Head of caudate nucleus (tissue), 42 donors: ENCODE measurements at regions of chr1 and their contacts with region 1.

Region 1: DNA sequence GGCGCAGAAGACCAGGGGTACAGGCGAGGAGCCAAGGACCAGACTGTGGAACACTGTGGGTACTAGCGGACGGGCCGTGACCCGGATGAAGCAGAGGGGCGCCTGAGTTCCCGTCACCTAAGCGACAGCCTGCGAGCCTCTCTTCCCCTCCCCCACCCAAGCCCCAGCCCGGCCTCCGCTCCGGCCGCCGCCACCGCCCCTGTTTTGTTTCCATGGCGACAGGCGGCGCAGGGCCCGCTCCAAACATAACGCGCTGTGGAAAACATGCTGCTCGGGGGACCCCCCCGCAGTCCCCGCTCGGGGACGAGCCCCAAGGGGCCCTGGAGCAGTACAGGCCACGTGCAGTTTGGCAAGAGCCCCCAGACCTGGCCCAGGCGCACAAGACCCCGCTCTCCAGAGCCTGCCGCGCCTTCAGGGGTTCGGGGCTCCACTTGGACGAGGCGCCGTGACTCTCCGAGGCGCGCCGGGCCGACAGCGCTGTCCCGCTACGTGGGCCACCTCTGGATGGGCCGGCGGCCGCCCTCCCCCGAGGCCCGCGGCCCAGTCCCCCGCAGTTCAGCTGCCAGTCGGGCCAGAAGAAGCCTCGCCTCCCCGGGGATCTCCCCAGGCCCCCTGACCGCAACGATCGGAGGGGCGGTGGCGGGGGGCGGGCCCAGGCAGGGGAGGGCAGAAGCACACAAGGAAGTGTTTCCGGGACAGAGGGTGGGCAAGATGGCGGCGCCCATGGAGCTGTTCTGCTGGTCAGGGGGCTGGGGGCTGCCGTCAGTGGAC is at the start of gene MTX1:
- DNase-seq: peak; percentile 77 to 96 (median 90)

Region 2: DNA sequence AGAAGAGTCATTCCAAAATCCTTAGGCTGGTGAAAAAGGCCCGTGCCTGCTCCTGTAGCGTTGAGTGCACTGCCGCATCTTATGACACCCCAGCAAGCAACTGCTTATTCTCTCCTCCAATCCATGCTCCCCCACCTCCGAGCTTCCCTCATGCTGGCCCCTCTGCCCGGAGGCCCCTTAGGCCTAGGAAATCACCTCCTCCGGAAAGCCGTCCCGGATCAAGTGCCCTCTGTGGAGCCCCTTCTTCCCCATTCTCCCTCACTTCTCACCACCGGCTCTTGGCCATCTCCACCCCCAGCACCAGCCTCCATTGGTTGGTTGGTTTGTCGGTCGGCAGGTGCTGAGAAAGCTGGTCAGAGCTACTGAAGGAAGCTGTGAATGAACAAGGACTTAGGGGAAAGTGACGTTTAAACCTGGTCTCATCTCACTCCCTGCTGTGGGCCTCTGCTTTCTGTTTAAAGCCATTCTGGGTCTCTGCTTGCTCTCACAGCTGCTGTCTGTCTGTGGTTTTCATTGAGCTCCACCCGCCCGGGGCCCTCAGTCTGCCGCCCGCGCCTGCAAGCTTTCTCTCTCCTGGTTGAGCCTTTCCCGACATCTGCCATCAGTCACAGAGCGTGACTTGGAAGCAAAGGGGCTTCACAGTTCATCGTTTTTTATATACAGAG is 460.9 kb before region 1 on chr1:
- intact Hi-C with region 1: no loop called
- DNase-seq: peak in 36 of 42 donors; percentile 31 to 85 (median 56)

Region 3: DNA sequence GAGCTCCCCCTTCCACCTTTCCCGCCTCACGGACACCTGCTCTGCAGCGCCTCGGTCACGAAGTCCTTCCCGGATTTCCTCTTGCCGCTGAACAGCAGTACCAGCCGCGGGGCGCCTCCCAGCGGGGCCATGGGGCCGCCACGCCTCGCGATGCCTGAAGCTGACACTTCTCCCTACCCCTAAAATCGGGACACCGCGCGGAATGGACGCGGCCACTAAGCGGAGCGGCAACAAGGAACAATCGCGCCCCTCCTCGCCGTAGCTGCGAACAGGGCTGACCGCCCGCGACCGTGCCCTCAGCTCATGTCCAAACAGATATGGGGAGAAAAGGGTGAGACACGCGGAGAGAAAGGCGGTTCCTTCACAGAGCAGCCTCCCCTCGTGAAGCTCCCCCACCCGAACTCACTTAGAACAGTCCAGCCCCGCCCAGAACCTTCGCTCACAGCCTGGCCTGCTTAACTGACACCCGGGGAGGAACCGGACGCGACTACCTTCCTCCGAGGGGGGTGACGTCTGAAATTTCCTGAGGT is 272.1 kb before region 1 on chr1 and contains the start of gene PMVK:
- intact Hi-C with region 1: no loop called
- DNase-seq: peak; percentile 92 to 99 (median 97)

Region 4: GRCh38 chr1:154974063-154974807 is 234.5 kb before region 1 on chr1 and contains the start of gene CKS1B:
- intact Hi-C with region 1: no loop called
- DNase-seq: peak; percentile 93 to 99 (median 98)

Region 5: GRCh38 chr1:155244368-155245162 is 35.8 kb after region 1 on chr1:
- intact Hi-C with region 1: loop called (anchors 5 kb)
- DNase-seq: peak; percentile 92 to 99 (median 98)